Dorsolateral prefrontal cortex (tissue), 120 donors: ENCODE measurements at regions of chr1 and their contacts with region 1.

Region 1: GRCh38 chr1:84620720-84621313 is 46.6 kb upstream of the CTBS start:
- DNase-seq: peak; percentile 50 to 90 (median 64)
- H3K4me3 ChIP-seq: peak overlapping the region; percentile 47 to 93 (median 74)
- H3K27ac ChIP-seq: peak overlapping the region in 57 of 59 donors; percentile 23 to 94 (median 87)
- H3K27me3 ChIP-seq: no peaks in the 10 kb centered on the region
- CTCF ChIP-seq: peak in 55 of 56 donors; percentile 86 to 100 (median 98)

Region 2: DNA sequence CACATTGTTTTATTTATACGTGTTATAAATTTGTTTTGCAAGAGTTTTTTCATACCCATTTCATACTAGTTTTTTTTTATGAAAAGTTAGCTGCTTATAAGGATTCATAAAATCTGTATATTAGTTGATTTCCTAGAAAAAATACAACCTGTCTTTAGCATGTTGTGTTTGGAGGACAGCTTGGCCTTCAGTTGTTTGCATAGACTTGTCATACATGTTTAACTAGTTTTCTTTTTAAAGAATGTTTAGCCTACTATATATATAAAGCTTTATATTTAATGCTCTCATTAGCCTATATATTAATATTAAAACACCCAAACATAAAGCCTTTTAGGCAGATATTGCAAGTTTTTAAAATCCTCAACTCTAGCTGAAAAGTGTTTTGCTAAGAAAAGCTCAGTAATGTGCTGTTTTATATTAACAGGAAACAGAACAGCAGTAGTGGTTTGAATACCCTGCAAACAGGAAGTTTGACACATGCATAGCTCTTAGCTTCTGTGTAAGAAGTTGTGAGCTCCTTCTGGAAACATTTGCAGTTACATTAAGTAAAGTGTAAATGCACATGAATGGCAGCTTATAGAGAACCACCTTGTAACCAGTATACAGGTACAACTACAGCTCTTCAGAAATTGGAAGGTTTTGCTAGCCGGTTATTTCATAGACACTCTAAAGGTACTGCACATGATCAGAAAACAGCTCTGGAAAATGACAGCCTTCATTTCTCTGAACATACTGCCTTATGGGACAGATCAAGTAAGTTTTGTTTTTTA is 476.8 kb before region 1 on chr1 and contains the start of gene PRKACB:
- intact Hi-C with region 1: loop called in 1 of 2 experiments (anchors 10 kb)
- DNase-seq: no peak
- H3K4me3 ChIP-seq: peak within 1 kb of the TSS in 46 of 59 donors; percentile 1 to 47 (median 20)
- H3K27ac ChIP-seq: peak within 1 kb of the TSS in 56 of 59 donors; percentile 2 to 80 (median 58)
- H3K27me3 ChIP-seq: no peaks in the 10 kb centered on the region
- CTCF ChIP-seq: peak in 1 of 56 donors; percentile 13
- total RNA-seq, gene PRKACB: 156 to 555 (median 433) TPM

Region 3: GRCh38 chr1:84156210-84156621 is 464.6 kb before region 1 on chr1:
- intact Hi-C with region 1: loop called in 1 of 2 experiments (anchors 5 kb)
- DNase-seq: no peak
- H3K4me3 ChIP-seq: no peak overlapping the region
- H3K27ac ChIP-seq: peak overlapping the region in 8 of 59 donors; percentile 5 to 39 (median 23)
- H3K27me3 ChIP-seq: no peaks in the 10 kb centered on the region
- CTCF ChIP-seq: no peak

Region 4: GRCh38 chr1:84506002-84506728 is 114.7 kb before region 1 on chr1 and contains the starts of genes GNG5 and SPATA1:
- intact Hi-C with region 1: loop called (anchors 5 kb)
- DNase-seq: peak; percentile 88 to 97 (median 94)
- H3K4me3 ChIP-seq: peak within 1 kb of the TSS; percentile 68 to 94 (median 84)
- H3K27ac ChIP-seq: peak within 1 kb of the TSS; percentile 10 to 97 (median 87)
- H3K27me3 ChIP-seq: no peaks in the 10 kb centered on the region
- CTCF ChIP-seq: peak in 24 of 56 donors; percentile 4 to 50 (median 18)
- total RNA-seq, gene GNG5: 8.0 to 50.7 (median 21.2) TPM
- total RNA-seq, gene SPATA1: 0.20 to 5.9 (median 1.9) TPM in 113 of 120 experiments, not detected in the others

Region 5: GRCh38 chr1:84573967-84574842 is 46.6 kb before region 1 on chr1 and contains the start of gene CTBS:
- intact Hi-C with region 1: loop called in 1 of 2 experiments (anchors 2 kb)
- DNase-seq: peak; percentile 64 to 85 (median 78)
- H3K4me3 ChIP-seq: peak within 1 kb of the TSS; percentile 50 to 95 (median 78)
- H3K27ac ChIP-seq: peak within 1 kb of the TSS; percentile 54 to 98 (median 93)
- H3K27me3 ChIP-seq: no peaks in the 10 kb centered on the region
- CTCF ChIP-seq: peak in 7 of 56 donors; percentile 3 to 47 (median 5)
- total RNA-seq, gene CTBS: 4.5 to 15.6 (median 8.4) TPM